K562 (cell line): ENCODE measurements at regions of chr4 and their contacts with region 1.

Region 1: GRCh38 chr4:105858466-105859040 is 36.7 kb upstream of the NPNT start:
- DNase-seq: no peak
- ATAC-seq: no peak
- H3K4me3 ChIP-seq: no peak overlapping the region
- H3K27ac ChIP-seq: no peak overlapping the region
- H3K4me1 ChIP-seq: no peaks in the 10 kb centered on the region
- H3K27me3 ChIP-seq: no peaks in the 10 kb centered on the region
- CTCF ChIP-seq: no peak
- EP300 ChIP-seq: no peak
- POLR2A ChIP-seq: no peak
- RAD21 ChIP-seq: no peak

Region 2: DNA sequence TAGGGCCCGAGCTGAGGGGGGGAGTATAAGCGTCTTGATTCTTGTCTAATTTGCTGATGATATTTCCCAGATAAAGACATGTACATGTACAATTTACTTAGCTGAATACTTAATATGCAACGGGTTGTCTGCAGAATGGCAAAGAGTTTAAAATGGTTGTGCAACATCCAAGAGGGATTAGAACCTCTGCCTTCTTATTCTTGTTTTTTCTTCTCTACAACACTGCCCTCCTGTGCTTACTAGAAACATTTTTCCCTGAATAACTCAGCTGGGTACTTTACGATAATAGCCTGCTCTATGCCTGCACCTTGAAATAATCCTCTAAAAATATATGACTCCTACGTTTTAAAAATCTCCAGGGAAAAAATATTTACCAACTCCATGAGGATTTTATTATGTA is 191.9 kb before region 1 on chr4:
- CTCF ChIA-PET with region 1: no interaction called
- POLR2A ChIA-PET with region 1: no interaction called
- in situ Hi-C with region 1: no loop called
- intact Hi-C with region 1: no loop called
- DNase-seq: peak in 2 of 4 experiments; percentile 7 to 9
- ATAC-seq: peak; percentile 87
- H3K4me3 ChIP-seq: no peak overlapping the region
- H3K27ac ChIP-seq: no peak overlapping the region
- H3K4me1 ChIP-seq: no peaks in the 10 kb centered on the region
- H3K27me3 ChIP-seq: no peaks in the 10 kb centered on the region; a peak in 1 of 5 replicates
- CTCF ChIP-seq: peak; percentile 4 to 40 (median 30); a peak in 3 of 6 replicates
- EP300 ChIP-seq: no peak
- POLR2A ChIP-seq: no peak
- RAD21 ChIP-seq: peak; percentile 42 to 54

Region 3: DNA sequence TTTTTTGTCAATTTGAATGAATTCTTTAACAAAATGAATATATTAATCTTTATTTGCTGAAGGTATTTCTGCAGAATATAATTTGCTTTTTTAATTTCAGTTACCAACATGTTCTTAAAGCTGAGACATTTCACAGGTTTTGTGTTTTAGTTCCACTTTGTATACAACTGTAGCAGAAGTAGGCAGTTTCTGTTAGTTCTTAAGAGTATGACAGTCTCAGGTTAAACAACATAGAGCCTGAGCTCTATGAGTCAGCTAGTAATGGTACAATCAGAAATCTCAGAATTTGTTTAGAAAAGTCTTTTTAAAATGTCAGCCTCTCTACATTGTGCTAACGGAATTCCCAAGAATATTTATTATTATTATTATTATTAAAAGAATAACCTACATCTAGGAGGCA is 99.6 kb before region 1 on chr4:
- CTCF ChIA-PET with region 1: no interaction called
- POLR2A ChIA-PET with region 1: no interaction called
- in situ Hi-C with region 1: no loop called
- intact Hi-C with region 1: no loop called
- DNase-seq: no peak
- ATAC-seq: no peak
- H3K4me3 ChIP-seq: no peak overlapping the region
- H3K27ac ChIP-seq: no peak overlapping the region
- H3K4me1 ChIP-seq: no peaks in the 10 kb centered on the region
- H3K27me3 ChIP-seq: no peaks in the 10 kb centered on the region
- CTCF ChIP-seq: no peak
- EP300 ChIP-seq: no peak
- POLR2A ChIP-seq: no peak
- RAD21 ChIP-seq: no peak

Region 4: GRCh38 chr4:105822061-105822460 is 36.5 kb before region 1 on chr4:
- CTCF ChIA-PET with region 1: no interaction called
- POLR2A ChIA-PET with region 1: no interaction called
- in situ Hi-C with region 1: no loop called
- intact Hi-C with region 1: loop called (anchors 1 kb)
- DNase-seq: no peak
- ATAC-seq: no peak
- H3K4me3 ChIP-seq: no peak overlapping the region
- H3K27ac ChIP-seq: no peak overlapping the region
- H3K4me1 ChIP-seq: no peaks in the 10 kb centered on the region
- H3K27me3 ChIP-seq: no peaks in the 10 kb centered on the region
- CTCF ChIP-seq: no peak
- EP300 ChIP-seq: no peak
- POLR2A ChIP-seq: no peak
- RAD21 ChIP-seq: no peak

Region 5: DNA sequence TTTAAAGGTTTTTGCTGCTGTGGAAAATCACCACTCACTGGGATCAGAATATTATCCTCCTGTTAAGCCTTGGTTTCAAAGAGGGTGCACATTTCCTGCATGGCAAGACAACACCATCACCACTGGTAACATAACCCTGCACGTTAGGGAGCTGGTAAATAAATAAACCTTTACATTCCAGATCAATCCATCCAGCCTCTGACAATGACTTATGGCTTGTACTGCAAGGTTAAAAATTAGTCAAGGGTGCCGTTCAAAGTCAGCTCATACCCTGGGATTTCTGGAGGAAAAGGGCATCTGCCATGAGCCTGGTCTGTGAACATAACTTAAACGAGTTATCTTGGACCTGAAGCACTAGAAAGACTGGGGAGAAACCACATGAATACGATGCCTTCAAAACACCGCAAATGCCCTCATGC is 139.6 kb after region 1 on chr4:
- CTCF ChIA-PET with region 1: no interaction called
- POLR2A ChIA-PET with region 1: no interaction called
- in situ Hi-C with region 1: no loop called
- intact Hi-C with region 1: no loop called
- DNase-seq: peak in 1 of 4 experiments; percentile 22
- ATAC-seq: no peak
- H3K4me3 ChIP-seq: no peak overlapping the region
- H3K27ac ChIP-seq: no peak overlapping the region
- H3K4me1 ChIP-seq: peaks cover 3 to 14% of the 10 kb centered on the region in 2 experiments; a peak in 3 of 5 replicates
- H3K27me3 ChIP-seq: peaks cover 4 to 5% of the 10 kb centered on the region in 2 experiments; a peak in 4 of 5 replicates
- CTCF ChIP-seq: no peak
- EP300 ChIP-seq: no peak
- POLR2A ChIP-seq: no peak
- RAD21 ChIP-seq: no peak